Tibial artery (tissue), 4 donors: ENCODE measurements at regions of chr13 and their contacts with region 1.

Region 1: DNA sequence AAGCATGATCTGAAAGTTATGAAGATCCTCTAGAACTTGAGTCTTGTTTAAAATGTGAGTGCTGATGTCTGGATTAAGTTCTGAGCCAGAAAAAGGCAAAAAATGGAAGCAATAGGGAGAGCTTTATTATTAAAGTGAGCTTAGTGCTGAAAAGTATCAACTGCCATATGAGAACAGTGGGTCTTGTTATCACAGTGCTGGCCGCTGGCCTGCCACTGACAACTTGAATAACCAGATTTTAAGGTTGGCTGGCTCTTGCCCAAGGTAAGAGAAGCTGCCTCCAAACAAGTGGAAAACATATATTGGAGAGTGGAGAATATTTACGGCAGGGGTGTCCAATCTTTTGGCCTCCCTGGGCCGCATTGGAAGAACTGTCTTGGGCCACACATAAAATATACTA is 33.9 kb downstream of the NUFIP1 start:
- DNase-seq: no peak
- H3K4me3 ChIP-seq: no peak overlapping the region
- H3K27ac ChIP-seq: no peak overlapping the region
- H3K4me1 ChIP-seq: no peaks in the 10 kb centered on the region
- H3K27me3 ChIP-seq: no peaks in the 10 kb centered on the region
- CTCF ChIP-seq: no peak

Region 2: GRCh38 chr13:43698758-43699157 is 1256.6 kb before region 1 on chr13:
- intact Hi-C with region 1: no loop called
- DNase-seq: no peak
- H3K4me3 ChIP-seq: no peak overlapping the region
- H3K27ac ChIP-seq: no peak overlapping the region
- H3K4me1 ChIP-seq: peaks cover 0 to 2% (median 0%) of the 10 kb centered on the region in 4 donors
- H3K27me3 ChIP-seq: no peaks in the 10 kb centered on the region
- CTCF ChIP-seq: no peak

Region 3: DNA sequence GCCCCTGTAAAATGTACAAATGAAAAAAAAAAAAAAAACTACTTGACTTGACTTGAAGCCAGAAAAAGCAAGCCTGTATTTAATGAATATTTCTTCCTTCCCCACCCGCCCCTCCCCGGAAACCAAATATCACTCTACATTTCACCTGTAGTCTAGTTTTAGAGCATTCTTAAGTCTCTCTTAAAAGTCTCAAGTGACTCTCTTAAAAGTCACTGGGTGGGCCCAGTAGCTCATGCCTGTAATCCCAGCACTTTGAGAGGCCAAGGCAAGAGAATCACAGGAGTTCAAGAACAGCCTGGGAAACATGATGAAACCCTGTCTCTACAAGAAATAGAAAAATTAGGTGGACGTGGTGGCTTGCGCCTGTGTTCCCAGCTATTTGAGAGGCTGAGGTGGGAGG is 451.3 kb before region 1 on chr13:
- intact Hi-C with region 1: loop called (anchors 5 kb)
- DNase-seq: no peak
- H3K4me3 ChIP-seq: no peak overlapping the region
- H3K27ac ChIP-seq: no peak overlapping the region
- H3K4me1 ChIP-seq: peaks cover 0 to 17% (median 0%) of the 10 kb centered on the region in 4 donors
- H3K27me3 ChIP-seq: no peaks in the 10 kb centered on the region
- CTCF ChIP-seq: no peak